ENCODE measurements at regions of chr14 and their contacts with region 1.

Region 1: DNA sequence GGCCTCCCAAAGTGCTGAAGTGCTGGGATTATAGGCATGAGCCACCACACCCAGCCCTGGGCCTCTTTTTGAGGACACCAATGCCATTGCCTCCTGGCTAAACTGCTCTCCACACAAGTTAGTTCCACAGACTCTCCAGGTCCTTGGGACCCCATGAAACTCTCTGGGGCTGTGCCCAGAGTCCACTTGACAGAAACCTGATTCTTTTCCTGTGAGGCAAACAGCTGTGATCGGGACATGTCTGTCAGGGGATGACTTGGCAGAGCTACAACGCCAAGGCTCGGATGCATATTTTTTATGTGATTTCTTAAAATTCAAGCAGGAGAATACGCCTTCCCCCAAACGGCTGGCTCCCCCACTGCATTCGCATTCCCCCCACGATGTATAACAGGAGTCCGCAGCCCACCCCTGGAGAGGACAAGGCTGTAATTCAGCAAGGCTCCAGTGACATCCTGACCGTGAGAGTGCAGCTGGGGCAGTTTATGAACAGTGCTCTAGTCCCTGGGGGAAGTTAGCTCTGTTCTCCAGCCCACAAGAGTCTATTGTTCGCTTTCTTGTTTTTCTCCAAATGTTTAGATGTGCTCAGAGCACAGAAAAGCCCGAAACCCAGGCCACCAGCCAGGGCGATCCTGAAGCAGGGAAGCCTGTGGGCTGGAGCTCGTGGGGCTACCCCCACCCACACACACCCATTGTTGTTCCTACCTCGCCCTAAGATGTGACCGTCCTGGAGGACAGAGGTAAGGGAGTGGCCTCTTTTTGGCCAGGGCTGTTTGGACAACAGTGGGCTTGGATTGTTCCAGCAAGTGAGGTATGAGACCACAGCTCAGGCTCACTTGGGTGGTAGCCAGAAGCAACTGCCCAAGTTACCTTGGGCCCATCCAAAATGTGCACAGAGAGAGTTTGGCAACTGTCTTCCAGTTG is 159.5 kb downstream of the ZFP36L1 start:
- DNase-seq: peak in 1 of 2 donors; percentile 67
- ATAC-seq: no peak
- H3K4me3 ChIP-seq: no peak overlapping the region
- H3K27ac ChIP-seq: no peak overlapping the region
- H3K4me1 ChIP-seq: no peaks in the 10 kb centered on the region
- H3K27me3 ChIP-seq: no peaks in the 10 kb centered on the region

Region 2: DNA sequence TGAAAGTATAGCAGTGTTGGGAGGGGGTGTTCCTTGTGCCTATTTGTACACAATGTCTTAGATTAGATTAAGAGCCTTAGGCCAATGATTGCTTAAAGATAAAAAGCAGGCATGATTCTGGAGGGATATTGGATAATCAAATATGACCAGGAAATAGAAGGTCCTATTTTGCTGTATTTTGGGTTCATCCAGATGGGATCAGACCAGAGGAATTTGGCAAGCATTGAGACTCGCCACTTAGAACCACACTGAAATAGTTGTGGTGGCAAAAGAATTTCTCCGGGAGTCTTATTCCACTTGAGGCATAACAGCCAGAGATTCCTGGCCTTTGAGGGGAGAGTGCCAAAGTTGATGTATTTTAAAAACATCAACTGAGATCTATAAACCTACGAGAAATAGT is 486.5 kb before region 1 on chr14:
- intact Hi-C with region 1: loop called in 1 of 2 experiments (anchors 5 kb)
- DNase-seq: no peak
- ATAC-seq: no peak
- H3K4me3 ChIP-seq: no peak overlapping the region
- H3K27ac ChIP-seq: no peak overlapping the region
- H3K4me1 ChIP-seq: peaks cover 2 to 8% of the 10 kb centered on the region in 2 donors
- H3K27me3 ChIP-seq: no peaks in the 10 kb centered on the region

Region 3: DNA sequence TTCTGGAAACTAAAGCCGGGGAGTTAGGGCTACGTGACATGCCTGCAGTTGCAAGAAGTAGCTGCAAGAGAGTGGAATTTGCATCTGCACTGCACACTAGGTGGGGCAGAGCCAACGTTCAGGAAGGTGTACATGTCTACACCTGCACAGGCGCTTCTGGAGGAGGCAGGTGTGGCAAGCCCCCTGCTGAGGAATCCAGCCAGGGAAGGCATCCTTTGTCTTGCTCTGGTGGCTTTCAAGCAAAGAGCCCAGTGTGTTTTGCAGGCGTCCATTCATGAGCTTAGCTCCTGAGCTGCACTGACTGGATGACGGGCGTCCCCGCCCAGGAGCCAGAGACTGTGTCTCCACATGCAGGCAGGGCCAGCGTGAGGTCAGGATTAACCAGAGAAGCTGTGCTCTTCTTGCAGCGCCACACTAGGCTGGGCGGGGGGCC is 43.2 kb after region 1 on chr14:
- intact Hi-C with region 1: no loop called
- DNase-seq: peak in 1 of 2 donors; percentile 46
- ATAC-seq: no peak
- H3K4me3 ChIP-seq: no peak overlapping the region
- H3K27ac ChIP-seq: no peak overlapping the region
- H3K4me1 ChIP-seq: peaks cover 0 to 3% of the 10 kb centered on the region in 2 donors
- H3K27me3 ChIP-seq: no peaks in the 10 kb centered on the region

Region 4: GRCh38 chr14:68695326-68695768 is 62.0 kb after region 1 on chr14:
- intact Hi-C with region 1: no loop called
- DNase-seq: peak in 1 of 2 donors; percentile 71
- ATAC-seq: peak; percentile 2
- H3K4me3 ChIP-seq: no peak overlapping the region
- H3K27ac ChIP-seq: peak overlapping the region in 1 of 2 donors; percentile 26
- H3K4me1 ChIP-seq: no peaks in the 10 kb centered on the region
- H3K27me3 ChIP-seq: no peaks in the 10 kb centered on the region

Measured in aorta (tissue), 5 donors.